ENCODE measurements at regions of chr2 and their contacts with region 1.

Region 1: GRCh38 chr2:167289651-167290410 is 401.6 kb downstream of the XIRP2 start:
- DNase-seq: no peak
- ATAC-seq: no peak
- H3K4me3 ChIP-seq: no peak overlapping the region
- H3K27ac ChIP-seq: no peak overlapping the region
- H3K4me1 ChIP-seq: no peaks in the 10 kb centered on the region
- H3K27me3 ChIP-seq: no peaks in the 10 kb centered on the region

Region 2: DNA sequence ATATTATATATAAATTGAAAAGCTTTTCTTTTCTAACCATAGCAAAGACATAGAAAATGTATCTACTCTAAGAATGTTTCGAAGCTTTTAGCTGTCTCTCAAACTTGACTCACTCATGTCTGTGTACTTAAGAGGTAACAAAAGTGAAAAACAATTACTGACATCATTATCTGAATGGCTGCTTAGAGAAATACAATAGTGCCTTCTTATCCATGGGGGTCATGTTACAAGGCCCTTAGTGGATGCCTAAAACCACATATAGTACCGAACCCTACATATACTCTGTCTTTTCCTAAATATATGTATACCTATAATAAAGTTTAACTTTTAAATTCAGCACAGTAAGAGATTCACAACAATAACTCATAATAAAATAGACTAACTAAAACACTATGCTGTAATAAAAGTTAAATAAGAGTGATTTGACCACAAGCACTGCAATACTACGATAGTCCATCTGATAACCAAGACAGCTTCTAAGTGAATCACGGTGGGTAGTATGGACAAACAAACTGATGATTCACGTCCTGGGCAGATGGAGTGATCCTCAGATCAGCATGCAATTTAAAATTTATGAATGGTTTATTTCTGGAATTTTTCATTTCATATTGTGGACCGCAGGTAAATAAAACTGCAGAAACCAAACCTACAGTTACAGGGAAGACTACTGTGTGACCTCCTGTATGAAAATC is 155.3 kb before region 1 on chr2:
- intact Hi-C with region 1: loop called in 1 of 2 experiments (anchors 10 kb)
- DNase-seq: no peak
- ATAC-seq: no peak
- H3K4me3 ChIP-seq: no peak overlapping the region
- H3K27ac ChIP-seq: no peak overlapping the region
- H3K4me1 ChIP-seq: no peaks in the 10 kb centered on the region
- H3K27me3 ChIP-seq: no peaks in the 10 kb centered on the region

Region 3: GRCh38 chr2:167271932-167272331 is 17.9 kb before region 1 on chr2:
- intact Hi-C with region 1: no loop called
- DNase-seq: no peak
- ATAC-seq: no peak
- H3K4me3 ChIP-seq: no peak overlapping the region
- H3K27ac ChIP-seq: no peak overlapping the region
- H3K4me1 ChIP-seq: no peaks in the 10 kb centered on the region
- H3K27me3 ChIP-seq: no peaks in the 10 kb centered on the region

Measured in aorta (tissue), 5 donors.